Right lobe of liver (tissue), 6 donors: ENCODE measurements at regions of chr5 and their contacts with region 1.

Region 1: GRCh38 chr5:149636851-149637246 is 55.6 kb downstream of the ARHGEF37 start:
- DNase-seq: peak; percentile 62 to 84 (median 80)
- ATAC-seq: peak; percentile 67 to 79 (median 74)
- H3K4me3 ChIP-seq: no peak overlapping the region
- H3K27ac ChIP-seq: no peak overlapping the region
- H3K4me1 ChIP-seq: peaks cover 0 to 14% (median 6%) of the 10 kb centered on the region in 4 donors
- H3K27me3 ChIP-seq: no peaks in the 10 kb centered on the region
- CTCF ChIP-seq: peak; percentile 75 to 88 (median 84)
- POLR2A ChIP-seq: no peak

Region 2: GRCh38 chr5:149682532-149683075 is 45.8 kb after region 1 on chr5:
- intact Hi-C with region 1: no loop called
- DNase-seq: no peak
- ATAC-seq: no peak
- H3K4me3 ChIP-seq: no peak overlapping the region
- H3K27ac ChIP-seq: no peak overlapping the region
- H3K4me1 ChIP-seq: peaks cover 0 to 4% (median 0%) of the 10 kb centered on the region in 4 donors
- H3K27me3 ChIP-seq: no peaks in the 10 kb centered on the region
- CTCF ChIP-seq: no peak
- POLR2A ChIP-seq: no peak

Region 3: GRCh38 chr5:149828161-149828884 is 191.5 kb after region 1 on chr5:
- intact Hi-C with region 1: loop called (anchors 5 kb)
- DNase-seq: peak; percentile 78 to 83 (median 82)
- ATAC-seq: peak; percentile 86 to 92 (median 90)
- H3K4me3 ChIP-seq: no peak overlapping the region
- H3K27ac ChIP-seq: no peak overlapping the region
- H3K4me1 ChIP-seq: no peaks in the 10 kb centered on the region
- H3K27me3 ChIP-seq: no peaks in the 10 kb centered on the region
- CTCF ChIP-seq: peak; percentile 84 to 93 (median 92)
- POLR2A ChIP-seq: no peak

Region 4: GRCh38 chr5:149834246-149834855 is 197.5 kb after region 1 on chr5:
- intact Hi-C with region 1: loop called (anchors 5 kb)
- DNase-seq: peak in 1 of 3 donors; percentile 55
- ATAC-seq: peak; percentile 65 to 78 (median 74)
- H3K4me3 ChIP-seq: no peak overlapping the region
- H3K27ac ChIP-seq: no peak overlapping the region
- H3K4me1 ChIP-seq: no peaks in the 10 kb centered on the region
- H3K27me3 ChIP-seq: no peaks in the 10 kb centered on the region
- CTCF ChIP-seq: peak; percentile 50 to 63 (median 60)
- POLR2A ChIP-seq: no peak

Region 5: GRCh38 chr5:149990518-149991376 is 353.9 kb after region 1 on chr5:
- intact Hi-C with region 1: loop called in 1 of 2 experiments (anchors 10 kb)
- DNase-seq: peak in 2 of 3 donors; percentile 48 to 63
- ATAC-seq: peak; percentile 96 to 99 (median 98)
- H3K4me3 ChIP-seq: no peak overlapping the region
- H3K27ac ChIP-seq: no peak overlapping the region
- H3K4me1 ChIP-seq: no peaks in the 10 kb centered on the region
- H3K27me3 ChIP-seq: no peaks in the 10 kb centered on the region
- CTCF ChIP-seq: peak; percentile 89 to 94 (median 91)
- POLR2A ChIP-seq: no peak

Region 6: DNA sequence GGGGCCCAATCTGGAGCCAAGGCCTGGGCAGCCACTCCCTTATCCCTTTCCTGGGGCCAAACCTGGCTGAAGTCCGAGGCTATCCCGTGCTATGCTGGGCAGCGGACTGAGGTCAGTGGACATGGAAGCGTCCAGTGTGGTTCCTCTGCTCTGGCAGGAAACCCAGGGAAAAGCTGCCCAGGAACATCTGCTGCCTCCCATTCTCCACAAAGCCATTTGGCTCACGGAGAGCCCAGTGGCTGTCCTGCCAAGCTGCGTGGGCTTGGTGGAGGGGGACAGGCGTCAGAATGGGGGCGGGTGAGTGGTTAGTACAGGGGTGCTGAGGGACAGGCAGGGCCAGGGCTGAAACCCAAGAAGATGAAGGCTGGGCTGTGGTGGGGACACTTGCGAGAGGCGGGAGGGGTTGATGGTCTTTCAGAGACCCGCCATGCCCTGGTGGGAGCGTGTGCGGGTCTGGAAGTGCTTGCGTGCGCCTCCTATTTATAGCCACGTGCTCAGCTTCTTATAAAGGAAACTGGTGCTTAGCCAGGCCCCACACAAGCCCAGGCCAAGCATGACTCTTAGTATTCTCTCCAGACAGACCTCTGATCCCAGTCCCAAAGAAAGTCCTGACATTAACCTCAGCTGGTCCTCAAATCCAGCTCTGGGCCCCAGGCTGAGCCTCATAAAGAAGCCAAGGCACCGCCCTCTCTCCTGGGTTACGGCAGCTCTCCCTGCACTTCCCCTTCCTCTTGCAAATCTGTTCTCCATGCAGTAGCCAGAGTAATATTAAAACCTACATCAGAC is 543.6 kb after region 1 on chr5:
- intact Hi-C with region 1: no loop called
- DNase-seq: peak in 1 of 3 donors; percentile 87
- ATAC-seq: peak; percentile 26 to 71 (median 40)
- H3K4me3 ChIP-seq: no peak overlapping the region
- H3K27ac ChIP-seq: no peak overlapping the region
- H3K4me1 ChIP-seq: peaks cover 0 to 7% (median 3%) of the 10 kb centered on the region in 4 donors
- H3K27me3 ChIP-seq: no peaks in the 10 kb centered on the region
- CTCF ChIP-seq: no peak
- POLR2A ChIP-seq: no peak